CD4-positive, alpha-beta T cell (primary cell): ENCODE measurements at regions of chr15 and their contacts with region 1.

Region 1: DNA sequence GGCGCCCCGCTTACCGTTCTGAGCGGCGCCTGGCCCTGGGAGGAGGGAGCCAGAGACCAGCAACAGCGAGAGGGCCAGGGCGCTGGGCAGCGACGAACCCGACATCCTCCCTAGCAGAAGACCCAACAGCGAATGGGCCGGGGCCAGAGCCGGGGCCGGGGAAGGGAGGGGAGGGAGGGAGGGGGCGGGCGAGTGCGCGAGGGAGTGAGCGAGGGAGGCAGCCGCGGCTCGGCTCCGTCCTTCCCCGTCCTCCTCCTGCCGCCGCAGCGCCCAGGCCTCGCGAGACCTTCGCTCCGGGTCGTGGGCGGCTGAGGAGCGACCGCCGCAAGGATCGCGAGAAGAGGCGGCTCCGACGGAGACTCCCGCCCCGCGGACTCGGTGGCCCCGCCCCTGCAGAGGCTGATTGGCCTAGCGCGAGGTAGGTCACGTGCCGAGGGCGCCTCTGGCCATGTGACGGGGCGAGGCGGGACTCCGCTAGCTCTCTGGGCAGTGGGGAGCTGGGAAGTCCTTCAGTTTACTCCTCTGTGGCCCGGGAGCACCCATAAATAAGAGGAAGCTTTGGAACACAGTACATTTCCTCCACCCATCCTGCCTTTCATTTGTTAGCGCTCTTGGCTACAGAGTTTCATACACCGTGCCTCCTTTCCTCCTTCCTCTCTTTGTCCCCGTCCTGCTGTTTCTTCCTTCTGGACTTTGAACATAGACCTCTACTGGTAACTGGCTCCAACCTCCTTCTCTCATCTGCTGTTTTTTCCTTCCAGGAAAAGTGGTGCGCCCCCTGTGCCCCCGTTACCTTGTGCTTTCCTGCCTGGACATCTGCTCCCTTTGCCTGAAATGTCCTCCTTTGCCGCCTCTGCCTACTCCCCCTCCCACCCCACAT is at the start of gene NPTN:
- DNase-seq: peak; percentile 94 to 99 (median 98)
- ATAC-seq: peak; percentile 89
- H3K4me3 ChIP-seq: peak within 1 kb of the TSS; percentile 86
- H3K4me3 Mint-ChIP-seq: peak within 1 kb of the TSS; percentile 93
- H3K27ac ChIP-seq: peak within 1 kb of the TSS; percentile 8 to 62
- H3K27ac Mint-ChIP-seq: peak within 1 kb of the TSS; percentile 60
- H3K4me1 ChIP-seq: peaks cover 24% of the 10 kb centered on the region
- H3K4me1 Mint-ChIP-seq: peaks cover 54% of the 10 kb centered on the region
- H3K27me3 ChIP-seq: no peaks in the 10 kb centered on the region
- H3K27me3 Mint-ChIP-seq: peaks cover 9% of the 10 kb centered on the region
- CTCF ChIP-seq: no peak
- total RNA-seq, gene NPTN: 9.3 to 13.5 TPM

Region 2: DNA sequence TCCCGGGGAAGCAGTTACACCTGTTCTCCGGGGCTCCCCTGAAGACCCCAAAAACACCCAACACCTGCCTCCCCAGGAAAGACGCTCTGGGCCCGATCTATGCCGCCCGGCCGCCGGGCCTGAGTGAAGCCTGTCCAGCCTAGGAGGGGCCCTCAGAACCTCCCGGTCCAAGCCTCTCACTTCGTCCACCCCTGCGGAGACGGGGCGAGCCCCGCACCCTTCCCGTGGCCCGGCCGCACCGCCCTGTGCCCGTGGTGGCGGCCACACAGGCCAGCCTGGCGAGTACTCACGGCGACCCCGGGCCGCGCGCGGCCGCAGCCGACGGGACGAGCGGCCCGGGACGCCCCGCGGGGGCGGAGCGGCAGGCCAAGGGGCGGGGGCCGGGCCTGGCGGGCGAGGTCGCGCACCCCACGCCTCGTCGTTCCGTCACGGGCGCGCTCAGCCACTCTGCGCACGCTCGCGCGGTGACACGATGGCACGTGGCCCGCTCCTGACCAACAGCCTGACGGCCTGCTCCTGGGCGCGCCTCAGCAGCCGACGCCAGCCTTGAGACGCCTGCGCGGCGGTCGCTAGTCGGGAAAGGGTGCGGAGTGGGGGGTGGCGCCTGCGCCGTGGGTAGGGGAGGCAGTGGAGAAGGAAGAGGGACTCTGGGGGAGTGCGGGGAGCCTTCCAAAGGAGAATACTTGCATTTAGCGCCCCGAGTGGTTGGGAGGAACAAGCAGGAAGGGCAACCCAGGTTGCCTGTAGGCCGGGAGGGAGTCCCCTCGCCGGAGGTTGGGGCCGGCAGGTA is 1360.9 kb before region 1 on chr15 and contains the start of gene PARP6:
- CTCF ChIA-PET with region 1: no interaction called
- POLR2A ChIA-PET with region 1: no interaction called
- intact Hi-C with region 1: loop called in 1 of 2 experiments (anchors 10 kb)
- DNase-seq: peak; percentile 95 to 100 (median 98)
- ATAC-seq: peak; percentile 94
- H3K4me3 ChIP-seq: peak within 1 kb of the TSS; percentile 89
- H3K4me3 Mint-ChIP-seq: peak within 1 kb of the TSS; percentile 92
- H3K27ac ChIP-seq: peak within 1 kb of the TSS; percentile 76 to 79
- H3K27ac Mint-ChIP-seq: peak within 1 kb of the TSS; percentile 93
- H3K4me1 ChIP-seq: peaks cover 25% of the 10 kb centered on the region
- H3K4me1 Mint-ChIP-seq: peaks cover 47% of the 10 kb centered on the region
- H3K27me3 ChIP-seq: no peaks in the 10 kb centered on the region
- H3K27me3 Mint-ChIP-seq: no peaks in the 10 kb centered on the region
- CTCF ChIP-seq: peak; percentile 80
- total RNA-seq, gene PARP6: 128 to 133 TPM

Region 3: DNA sequence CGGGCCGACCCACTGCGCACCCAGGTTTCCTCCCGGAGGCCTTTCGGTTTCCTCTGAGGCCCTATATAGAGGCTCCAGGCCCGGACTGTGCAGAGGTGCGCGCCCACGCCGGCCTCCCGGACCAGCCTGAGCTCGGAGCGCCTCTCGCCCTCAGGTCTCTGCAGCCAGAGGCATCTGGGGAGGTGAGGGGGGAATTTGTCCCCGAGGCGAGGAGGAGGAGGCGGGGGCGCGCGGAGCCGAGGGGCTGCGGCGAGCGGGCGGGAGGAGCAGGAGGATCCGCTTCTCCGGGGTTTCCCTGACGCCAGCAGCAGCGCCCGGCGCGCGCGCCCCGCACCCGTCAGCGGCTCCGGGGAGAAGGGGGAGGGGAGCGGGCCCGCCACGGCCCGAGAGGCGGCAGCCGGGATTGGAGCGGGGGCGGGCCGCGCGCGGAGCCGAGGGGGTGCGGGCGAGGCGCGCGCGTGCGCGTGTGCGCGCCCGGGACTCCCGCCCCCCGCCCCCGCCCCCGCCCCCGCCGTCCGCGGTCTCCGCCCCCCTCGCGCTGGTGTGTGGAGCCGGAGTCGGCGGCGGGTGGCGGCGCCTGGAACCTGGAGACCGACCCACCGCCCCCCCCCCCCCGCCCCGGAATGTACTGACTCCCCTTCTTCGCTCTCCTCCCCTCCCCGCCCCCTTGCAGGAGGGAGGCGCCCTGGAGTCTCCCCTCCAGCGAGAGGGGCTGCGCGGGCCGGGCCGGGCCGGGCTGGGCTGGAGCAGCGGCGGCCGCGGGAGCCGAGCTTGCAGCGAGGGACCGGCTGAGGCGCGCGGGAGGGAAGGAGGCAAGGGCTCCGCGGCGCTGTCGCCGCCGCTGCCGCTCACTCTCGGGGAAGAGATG is 581.3 kb before region 1 on chr15 and contains the start of gene NEO1:
- CTCF ChIA-PET with region 1: no interaction called
- POLR2A ChIA-PET with region 1: no interaction called
- intact Hi-C with region 1: loop called (anchors 5 to 10 kb)
- DNase-seq: peak; percentile 71 to 93 (median 80)
- ATAC-seq: peak; percentile 81
- H3K4me3 ChIP-seq: peak within 1 kb of the TSS; percentile 85
- H3K4me3 Mint-ChIP-seq: peak within 1 kb of the TSS; percentile 91
- H3K27ac ChIP-seq: peak within 1 kb of the TSS in 1 of 2 donors; percentile 50
- H3K27ac Mint-ChIP-seq: peak within 1 kb of the TSS; percentile 85
- H3K4me1 ChIP-seq: peaks cover 11% of the 10 kb centered on the region
- H3K4me1 Mint-ChIP-seq: peaks cover 14% of the 10 kb centered on the region
- H3K27me3 ChIP-seq: peaks cover 0 to 7% of the 10 kb centered on the region in 2 experiments
- H3K27me3 Mint-ChIP-seq: peaks cover 11% of the 10 kb centered on the region
- CTCF ChIP-seq: no peak
- total RNA-seq, gene NEO1: 6.0 to 8.0 TPM

Region 4: GRCh38 chr15:73440571-73440970 is 192.8 kb before region 1 on chr15:
- CTCF ChIA-PET with region 1: no interaction called
- POLR2A ChIA-PET with region 1: no interaction called
- intact Hi-C with region 1: no loop called
- DNase-seq: no peak
- ATAC-seq: no peak
- H3K4me3 ChIP-seq: no peak overlapping the region
- H3K4me3 Mint-ChIP-seq: no peak overlapping the region
- H3K27ac ChIP-seq: no peak overlapping the region
- H3K27ac Mint-ChIP-seq: no peak overlapping the region
- H3K4me1 ChIP-seq: no peaks in the 10 kb centered on the region
- H3K4me1 Mint-ChIP-seq: no peaks in the 10 kb centered on the region
- H3K27me3 ChIP-seq: peaks cover 3 to 8% of the 10 kb centered on the region in 2 experiments
- H3K27me3 Mint-ChIP-seq: peaks cover 36% of the 10 kb centered on the region
- CTCF ChIP-seq: no peak

Region 5: GRCh38 chr15:73617301-73617831 is 16.0 kb before region 1 on chr15:
- CTCF ChIA-PET with region 1: interaction called, 45 read pairs
- POLR2A ChIA-PET with region 1: interaction called, 4 read pairs
- intact Hi-C with region 1: no loop called
- DNase-seq: no peak
- ATAC-seq: no peak
- H3K4me3 ChIP-seq: no peak overlapping the region
- H3K4me3 Mint-ChIP-seq: no peak overlapping the region
- H3K27ac ChIP-seq: no peak overlapping the region
- H3K27ac Mint-ChIP-seq: no peak overlapping the region
- H3K4me1 ChIP-seq: no peaks in the 10 kb centered on the region
- H3K4me1 Mint-ChIP-seq: peaks cover 65% of the 10 kb centered on the region
- H3K27me3 ChIP-seq: no peaks in the 10 kb centered on the region
- H3K27me3 Mint-ChIP-seq: no peaks in the 10 kb centered on the region
- CTCF ChIP-seq: no peak

Region 6: GRCh38 chr15:73697033-73697467 is 63.7 kb after region 1 on chr15:
- CTCF ChIA-PET with region 1: interaction called, 19 read pairs
- POLR2A ChIA-PET with region 1: no interaction called
- intact Hi-C with region 1: loop called (anchors 1 to 2 kb)
- DNase-seq: peak; percentile 47 to 90 (median 70)
- ATAC-seq: peak; percentile 92
- H3K4me3 ChIP-seq: no peak overlapping the region
- H3K4me3 Mint-ChIP-seq: peak overlapping the region; percentile 34
- H3K27ac ChIP-seq: no peak overlapping the region
- H3K27ac Mint-ChIP-seq: peak overlapping the region; percentile 10
- H3K4me1 ChIP-seq: peaks cover 26% of the 10 kb centered on the region
- H3K4me1 Mint-ChIP-seq: peaks cover 26% of the 10 kb centered on the region
- H3K27me3 ChIP-seq: peaks cover 12 to 41% of the 10 kb centered on the region in 2 experiments
- H3K27me3 Mint-ChIP-seq: peaks cover 65% of the 10 kb centered on the region
- CTCF ChIP-seq: no peak

Region 7: GRCh38 chr15:73781038-73781925 is 147.9 kb after region 1 on chr15:
- CTCF ChIA-PET with region 1: no interaction called
- POLR2A ChIA-PET with region 1: no interaction called
- intact Hi-C with region 1: no loop called
- DNase-seq: no peak
- ATAC-seq: no peak
- H3K4me3 ChIP-seq: no peak overlapping the region
- H3K4me3 Mint-ChIP-seq: no peak overlapping the region
- H3K27ac ChIP-seq: no peak overlapping the region
- H3K27ac Mint-ChIP-seq: no peak overlapping the region
- H3K4me1 ChIP-seq: no peaks in the 10 kb centered on the region
- H3K4me1 Mint-ChIP-seq: no peaks in the 10 kb centered on the region
- H3K27me3 ChIP-seq: no peaks in the 10 kb centered on the region
- H3K27me3 Mint-ChIP-seq: no peaks in the 10 kb centered on the region
- CTCF ChIP-seq: no peak